ENCODE measurements at regions of chr11 and their contacts with region 1.

Region 1: DNA sequence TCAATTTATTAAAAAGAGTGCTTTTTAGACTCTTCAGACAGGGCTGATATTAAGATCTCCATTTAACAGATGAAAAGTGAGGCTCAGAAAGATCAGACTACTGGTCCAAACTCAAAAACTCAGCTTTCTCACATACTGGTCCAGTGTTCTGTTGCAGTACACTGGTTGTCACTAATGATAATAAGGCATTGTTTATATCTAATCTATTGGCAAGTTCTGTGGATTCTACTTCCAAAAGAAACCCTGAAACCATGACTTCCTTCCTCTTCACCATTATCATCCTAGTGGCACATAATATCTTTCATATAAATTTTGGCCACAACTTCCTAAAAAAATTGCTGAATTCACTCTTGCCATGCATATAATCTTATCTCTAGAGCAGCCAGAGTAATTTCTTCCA is 36.9 kb downstream of the F2 start:
- DNase-seq: no peak
- H3K4me3 ChIP-seq: no peak overlapping the region
- H3K4me1 ChIP-seq: no peaks in the 10 kb centered on the region
- H3K27me3 ChIP-seq: no peaks in the 10 kb centered on the region

Region 2: DNA sequence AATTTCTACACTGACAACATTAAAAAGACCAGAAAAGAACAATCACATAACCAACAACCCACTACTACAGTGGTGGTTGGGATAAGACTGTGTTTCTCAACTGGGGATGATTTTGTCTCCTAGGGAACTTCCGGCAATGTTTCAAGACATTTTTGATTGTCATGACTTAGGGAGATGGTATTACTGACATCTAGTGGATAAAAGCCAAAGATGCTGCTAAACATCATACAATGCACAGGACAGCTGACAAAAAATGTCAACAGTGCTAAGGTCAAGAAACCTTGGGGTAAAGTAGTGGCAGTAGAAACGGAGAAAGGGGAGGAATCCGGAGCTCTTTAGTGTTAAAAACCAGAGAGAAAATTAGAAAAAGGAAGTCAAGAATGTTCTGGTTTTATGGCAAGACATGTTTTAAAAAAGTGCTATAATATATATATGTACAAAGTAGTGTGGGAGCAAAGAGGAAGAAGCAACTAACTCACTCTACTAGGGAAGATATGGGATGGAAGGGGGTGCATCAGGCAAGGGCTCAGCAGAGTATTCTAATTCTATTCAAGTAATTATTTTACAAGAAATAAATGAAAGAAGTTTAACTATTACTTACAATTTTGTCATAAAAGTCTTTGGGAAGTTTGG is 53.0 kb after region 1 on chr11:
- in situ Hi-C with region 1: loop called (anchors 10 kb)
- DNase-seq: peak in 1 of 2 experiments; percentile 18
- H3K4me3 ChIP-seq: no peak overlapping the region
- H3K4me1 ChIP-seq: no peaks in the 10 kb centered on the region
- H3K27me3 ChIP-seq: no peaks in the 10 kb centered on the region

Region 3: GRCh38 chr11:47725445-47726442 is 969.8 kb after region 1 on chr11:
- in situ Hi-C with region 1: loop called (anchors 25 kb)
- DNase-seq: no peak
- H3K4me3 ChIP-seq: no peak overlapping the region
- H3K4me1 ChIP-seq: no peaks in the 10 kb centered on the region
- H3K27me3 ChIP-seq: no peaks in the 10 kb centered on the region